Activated B cell treated with CpG ODN at 0.5 μM for 24 hours (primary cell): ENCODE measurements at regions of chr12 and their contacts with region 1.

Region 1: DNA sequence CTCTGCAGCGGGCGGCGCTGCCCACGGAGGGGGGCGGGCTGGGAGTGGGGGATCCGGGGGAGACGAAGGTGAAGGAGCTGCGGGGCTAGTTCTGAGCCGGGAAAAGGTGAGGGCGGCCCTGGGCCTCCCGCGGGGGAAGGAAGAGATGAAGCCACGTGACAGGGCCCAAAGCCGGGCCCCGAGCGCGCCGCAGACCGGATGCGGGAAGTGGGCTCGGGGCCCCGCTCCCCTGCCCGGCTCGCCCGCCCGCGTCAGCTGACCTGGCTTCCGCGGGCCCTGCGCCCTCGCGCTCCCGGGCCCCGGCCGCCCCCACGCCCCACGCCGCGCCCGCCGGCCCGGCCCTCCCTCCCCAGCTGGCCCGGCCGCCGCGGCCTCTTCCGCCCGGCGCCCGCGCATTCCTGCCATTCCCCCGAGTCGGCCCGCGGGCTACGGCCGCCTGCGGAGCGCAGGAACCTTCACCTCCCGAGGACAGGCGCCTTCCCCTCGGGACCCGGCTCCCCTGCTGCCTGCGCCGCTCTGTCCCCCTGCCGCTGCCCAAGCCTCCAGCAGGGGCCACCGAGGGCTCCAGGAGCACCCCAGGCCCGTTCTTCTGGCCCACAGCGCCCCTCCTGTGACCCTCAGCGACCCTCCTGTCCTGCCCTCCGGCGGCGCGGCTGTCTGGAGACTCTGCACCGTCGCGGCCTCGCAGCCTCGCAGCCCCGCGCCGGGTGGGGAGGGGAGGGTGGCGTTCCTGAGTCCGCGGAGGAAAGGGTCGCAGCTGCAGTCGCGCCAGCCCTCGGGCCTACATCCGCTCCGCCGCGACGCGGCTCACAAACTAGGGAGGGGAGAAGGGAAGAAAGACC is 20.4 kb downstream of the NINJ2 start:
- DNase-seq: peak; percentile 77
- ATAC-seq: peak; percentile 72
- H3K4me3 Mint-ChIP-seq: peak overlapping the region; percentile 91
- H3K27ac Mint-ChIP-seq: peak overlapping the region; percentile 96
- H3K4me1 Mint-ChIP-seq: peaks cover 47% of the 10 kb centered on the region
- H3K27me3 Mint-ChIP-seq: no peaks in the 10 kb centered on the region
- CTCF ChIP-seq: no peak

Region 2: GRCh38 chr12:622416-622815 is 20.4 kb before region 1 on chr12:
- CTCF ChIA-PET with region 1: interaction called, 3 read pairs
- POLR2A ChIA-PET with region 1: interaction called, 4 read pairs
- intact Hi-C with region 1: loop called (anchors 2 kb)
- DNase-seq: no peak
- ATAC-seq: no peak
- H3K4me3 Mint-ChIP-seq: no peak overlapping the region
- H3K27ac Mint-ChIP-seq: no peak overlapping the region
- H3K4me1 Mint-ChIP-seq: peaks cover 8% of the 10 kb centered on the region
- H3K27me3 Mint-ChIP-seq: no peaks in the 10 kb centered on the region
- CTCF ChIP-seq: no peak

Region 3: GRCh38 chr12:659090-659705 is 16.3 kb after region 1 on chr12:
- CTCF ChIA-PET with region 1: no interaction called
- POLR2A ChIA-PET with region 1: interaction called, 18 read pairs
- intact Hi-C with region 1: loop called (anchors 1 kb)
- DNase-seq: no peak
- ATAC-seq: peak; percentile 90
- H3K4me3 Mint-ChIP-seq: peak overlapping the region; percentile 1
- H3K27ac Mint-ChIP-seq: peak overlapping the region; percentile 1
- H3K4me1 Mint-ChIP-seq: peaks cover 31% of the 10 kb centered on the region
- H3K27me3 Mint-ChIP-seq: no peaks in the 10 kb centered on the region
- CTCF ChIP-seq: no peak

Region 4: DNA sequence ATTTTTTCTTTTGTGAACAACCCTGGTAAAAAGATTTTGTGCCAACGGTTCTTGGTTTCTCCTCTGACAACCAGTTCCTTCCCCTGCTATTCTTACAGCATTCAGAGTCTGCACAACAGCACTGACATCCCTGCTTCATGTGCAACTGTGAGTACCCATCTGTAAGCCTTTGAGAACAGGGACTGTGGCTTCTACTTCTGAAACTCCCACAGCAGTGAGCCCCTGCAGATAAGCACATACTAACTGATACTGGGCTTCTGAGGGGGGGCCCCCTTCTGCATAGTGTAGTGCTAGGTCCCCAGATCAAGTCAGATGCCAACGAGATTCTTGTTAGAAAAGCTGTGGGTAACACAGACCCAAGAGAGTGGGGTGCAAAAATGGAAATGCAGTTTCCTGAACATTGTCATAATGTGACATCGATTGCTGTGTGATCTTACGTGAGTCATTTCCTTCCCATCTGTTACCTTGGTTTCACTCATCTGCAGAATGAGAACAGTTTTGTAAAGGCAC is 31.5 kb after region 1 on chr12:
- CTCF ChIA-PET with region 1: interaction called, 12 read pairs
- POLR2A ChIA-PET with region 1: interaction called, 67 read pairs
- intact Hi-C with region 1: loop called (anchors 1 kb)
- DNase-seq: peak; percentile 45
- ATAC-seq: peak; percentile 86
- H3K4me3 Mint-ChIP-seq: peak overlapping the region; percentile 79
- H3K27ac Mint-ChIP-seq: peak overlapping the region; percentile 96
- H3K4me1 Mint-ChIP-seq: peaks cover 53% of the 10 kb centered on the region
- H3K27me3 Mint-ChIP-seq: no peaks in the 10 kb centered on the region
- CTCF ChIP-seq: no peak

Region 5: DNA sequence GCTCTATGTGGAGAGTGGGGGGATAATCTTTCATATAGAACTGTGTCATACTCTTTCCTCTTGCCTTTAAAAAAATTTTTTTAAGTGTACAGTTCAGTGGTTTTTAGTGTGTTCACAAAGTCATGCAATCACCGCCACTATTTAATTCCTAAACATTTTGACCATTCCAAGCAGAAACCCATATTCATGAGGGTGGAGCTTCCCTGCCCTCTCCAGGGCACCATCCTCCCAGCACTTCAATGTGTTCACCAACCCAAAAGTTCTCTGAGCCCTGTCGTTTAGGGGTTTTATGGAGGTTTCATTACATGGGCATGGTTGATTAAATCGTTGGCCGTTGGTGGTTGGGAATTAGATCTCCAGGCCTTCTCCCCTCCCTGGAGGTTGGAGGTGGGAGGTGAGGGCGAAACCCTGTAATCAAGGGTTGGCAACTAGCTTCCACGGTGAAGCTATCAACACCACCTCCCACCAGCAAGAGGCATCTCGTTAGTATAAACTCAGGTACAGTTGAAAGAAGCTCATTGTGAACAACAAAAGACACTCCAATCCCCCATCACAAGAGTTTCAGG is 66.7 kb after region 1 on chr12:
- CTCF ChIA-PET with region 1: no interaction called
- POLR2A ChIA-PET with region 1: no interaction called
- intact Hi-C with region 1: no loop called
- DNase-seq: no peak
- ATAC-seq: no peak
- H3K4me3 Mint-ChIP-seq: no peak overlapping the region
- H3K27ac Mint-ChIP-seq: no peak overlapping the region
- H3K4me1 Mint-ChIP-seq: no peaks in the 10 kb centered on the region
- H3K27me3 Mint-ChIP-seq: no peaks in the 10 kb centered on the region
- CTCF ChIP-seq: no peak

Region 6: DNA sequence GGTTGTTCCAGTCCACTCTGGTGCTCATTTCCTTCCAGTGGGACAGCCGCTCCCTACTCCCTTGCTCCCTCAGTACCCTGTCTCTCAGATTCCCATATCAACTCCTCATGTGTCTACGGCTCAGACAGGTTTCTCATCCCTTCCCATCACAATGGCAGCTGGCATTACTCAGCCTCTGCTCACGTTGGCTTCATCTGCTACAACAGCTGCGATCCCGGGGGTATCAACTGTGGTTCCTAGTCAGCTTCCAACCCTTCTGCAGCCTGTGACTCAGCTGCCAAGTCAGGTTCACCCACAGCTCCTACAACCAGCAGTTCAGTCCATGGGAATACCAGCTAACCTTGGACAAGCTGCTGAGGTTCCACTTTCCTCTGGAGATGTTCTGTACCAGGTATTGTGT is 236.8 kb after region 1 on chr12:
- CTCF ChIA-PET with region 1: no interaction called
- POLR2A ChIA-PET with region 1: no interaction called
- intact Hi-C with region 1: no loop called
- DNase-seq: no peak
- ATAC-seq: no peak
- H3K4me3 Mint-ChIP-seq: no peak overlapping the region
- H3K27ac Mint-ChIP-seq: no peak overlapping the region
- H3K4me1 Mint-ChIP-seq: no peaks in the 10 kb centered on the region
- H3K27me3 Mint-ChIP-seq: no peaks in the 10 kb centered on the region
- CTCF ChIP-seq: no peak

Region 7: DNA sequence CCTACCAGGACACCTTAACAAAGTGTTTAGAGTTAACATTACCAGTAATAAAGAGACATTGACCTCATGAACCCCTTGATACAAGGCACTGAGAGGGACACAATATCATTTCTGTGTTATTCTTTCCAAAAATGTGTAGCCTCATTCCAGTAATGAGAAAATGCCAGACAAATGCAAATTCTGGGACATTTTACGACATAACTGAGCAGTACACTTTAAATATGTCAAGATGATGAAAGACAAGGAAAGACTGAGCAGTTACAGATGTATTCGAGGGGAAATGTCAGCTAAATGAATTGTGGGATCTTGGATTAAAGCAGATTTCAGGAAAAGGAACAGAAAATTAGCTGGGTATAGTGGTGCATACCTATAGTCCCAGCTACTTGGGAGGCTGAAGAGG is 603.8 kb after region 1 on chr12:
- CTCF ChIA-PET with region 1: no interaction called
- POLR2A ChIA-PET with region 1: no interaction called
- intact Hi-C with region 1: no loop called
- DNase-seq: no peak
- ATAC-seq: no peak
- H3K4me3 Mint-ChIP-seq: no peak overlapping the region
- H3K27ac Mint-ChIP-seq: no peak overlapping the region
- H3K4me1 Mint-ChIP-seq: no peaks in the 10 kb centered on the region
- H3K27me3 Mint-ChIP-seq: no peaks in the 10 kb centered on the region
- CTCF ChIP-seq: no peak